IMR-90 (cell line): ENCODE measurements at regions of chr1 and their contacts with region 1.

Region 1: DNA sequence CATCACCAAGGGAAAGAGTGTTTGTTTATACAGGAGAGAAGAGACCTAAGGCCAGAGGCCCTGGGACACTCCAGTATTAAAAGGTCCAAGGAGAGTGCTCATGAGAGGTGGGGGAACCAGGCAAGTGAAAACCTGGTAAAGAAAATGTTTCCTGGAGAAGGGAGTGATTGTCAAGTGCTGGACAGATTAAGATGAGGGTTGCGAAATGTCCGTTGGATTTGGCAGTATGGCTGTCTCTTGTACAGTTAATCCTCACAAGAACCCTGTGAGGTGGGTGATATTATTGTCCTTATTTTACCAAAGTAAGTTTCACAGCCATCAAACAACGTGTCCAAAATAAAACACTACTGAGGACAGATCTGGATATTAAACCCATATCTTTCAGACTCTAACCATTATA is 44.2 kb downstream of the RPAP2 start:
- DNase-seq: no peak
- ATAC-seq: no peak
- H3K4me3 ChIP-seq: no peak overlapping the region
- H3K27ac ChIP-seq: no peak overlapping the region
- H3K4me1 ChIP-seq: no peaks in the 10 kb centered on the region
- H3K27me3 ChIP-seq: no peaks in the 10 kb centered on the region
- CTCF ChIP-seq: no peak
- POLR2A ChIP-seq: no peak
- RAD21 ChIP-seq: no peak

Region 2: DNA sequence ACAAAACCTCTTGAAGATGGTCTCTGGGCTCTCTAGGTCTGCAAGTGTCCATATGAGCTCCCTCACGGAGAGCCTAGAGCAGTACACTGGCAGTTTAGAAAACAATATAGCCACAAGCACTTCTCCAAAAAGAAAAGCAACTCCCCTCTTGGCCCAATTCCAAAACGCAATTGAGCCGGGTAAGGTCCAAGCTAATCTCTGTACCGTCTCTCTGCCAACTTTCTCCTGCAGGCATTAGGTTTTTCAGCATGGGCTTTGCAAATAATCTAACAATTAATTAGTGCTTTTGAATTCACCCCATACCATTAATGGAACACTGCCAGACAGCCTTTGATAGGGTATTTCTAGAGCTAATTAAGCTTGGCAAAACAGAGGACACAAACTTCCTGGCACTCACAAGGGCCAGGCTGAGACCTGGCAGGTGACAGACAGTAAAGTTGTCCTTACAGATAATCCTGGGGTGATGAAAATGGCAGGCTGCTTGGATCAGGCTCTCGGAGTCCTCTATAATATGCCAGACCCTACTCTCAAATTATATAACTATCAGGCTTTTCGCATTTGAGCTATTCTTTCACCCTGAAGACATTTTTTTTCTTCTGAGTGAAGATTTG is 496.9 kb before region 1 on chr1:
- CTCF ChIA-PET with region 1: no interaction called
- POLR2A ChIA-PET with region 1: interaction called, 10 read pairs
- dilution Hi-C with region 1: no loop called
- in situ Hi-C with region 1: no loop called
- intact Hi-C with region 1: no loop called
- DNase-seq: peak; percentile 46
- ATAC-seq: peak; percentile 45
- H3K4me3 ChIP-seq: no peak overlapping the region
- H3K27ac ChIP-seq: peak overlapping the region; percentile 65; the same call in 1 of the 2 replicates
- H3K4me1 ChIP-seq: peaks cover 10% of the 10 kb centered on the region
- H3K27me3 ChIP-seq: no peaks in the 10 kb centered on the region
- CTCF ChIP-seq: no peak
- POLR2A ChIP-seq: no peak
- RAD21 ChIP-seq: no peak

Region 3: GRCh38 chr1:92310185-92310597 is 32.9 kb before region 1 on chr1:
- CTCF ChIA-PET with region 1: interaction called, 3 read pairs
- POLR2A ChIA-PET with region 1: no interaction called
- dilution Hi-C with region 1: no loop called
- in situ Hi-C with region 1: no loop called
- intact Hi-C with region 1: loop called (anchors 5 kb)
- DNase-seq: peak; percentile 50
- ATAC-seq: peak; percentile 66
- H3K4me3 ChIP-seq: no peak overlapping the region
- H3K27ac ChIP-seq: no peak overlapping the region
- H3K4me1 ChIP-seq: no peaks in the 10 kb centered on the region
- H3K27me3 ChIP-seq: no peaks in the 10 kb centered on the region
- CTCF ChIP-seq: peak; percentile 65
- POLR2A ChIP-seq: no peak
- RAD21 ChIP-seq: peak; percentile 64